Left ventricle myocardium superior (tissue), 1 donor: ENCODE measurements at regions of chr7 and their contacts with region 1.

Region 1: GRCh38 chr7:82414389-82414788 is 29.2 kb downstream of the CACNA2D1 start:
- DNase-seq: no peak
- ATAC-seq: no peak

Region 2: GRCh38 chr7:82373926-82374640 is 40.3 kb before region 1 on chr7:
- intact Hi-C with region 1: loop called (anchors 2 kb)
- DNase-seq: no peak
- ATAC-seq: peak; percentile 75

Region 3: DNA sequence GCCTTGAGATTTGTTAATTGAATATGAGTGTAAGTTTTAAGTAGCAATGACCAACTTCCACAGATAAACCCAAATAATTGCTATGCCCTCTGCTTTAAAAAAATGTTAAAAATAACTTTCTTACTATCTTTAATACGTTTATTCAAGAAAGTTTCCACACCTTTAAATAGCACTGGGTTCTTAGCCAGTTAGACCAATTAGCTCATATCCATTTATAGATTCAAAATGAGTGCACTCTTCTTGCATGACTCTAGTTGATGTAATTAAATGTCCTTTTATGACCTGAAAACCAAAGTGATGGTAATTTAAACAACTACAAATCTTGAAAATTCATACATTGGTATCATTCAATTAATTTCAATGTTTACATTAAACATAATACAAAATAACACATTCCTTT is 80.0 kb after region 1 on chr7:
- intact Hi-C with region 1: no loop called
- DNase-seq: no peak
- ATAC-seq: peak; percentile 77